Left cardiac atrium (tissue), 4 donors: ENCODE measurements at regions of chr4 and their contacts with region 1.

Region 1: DNA sequence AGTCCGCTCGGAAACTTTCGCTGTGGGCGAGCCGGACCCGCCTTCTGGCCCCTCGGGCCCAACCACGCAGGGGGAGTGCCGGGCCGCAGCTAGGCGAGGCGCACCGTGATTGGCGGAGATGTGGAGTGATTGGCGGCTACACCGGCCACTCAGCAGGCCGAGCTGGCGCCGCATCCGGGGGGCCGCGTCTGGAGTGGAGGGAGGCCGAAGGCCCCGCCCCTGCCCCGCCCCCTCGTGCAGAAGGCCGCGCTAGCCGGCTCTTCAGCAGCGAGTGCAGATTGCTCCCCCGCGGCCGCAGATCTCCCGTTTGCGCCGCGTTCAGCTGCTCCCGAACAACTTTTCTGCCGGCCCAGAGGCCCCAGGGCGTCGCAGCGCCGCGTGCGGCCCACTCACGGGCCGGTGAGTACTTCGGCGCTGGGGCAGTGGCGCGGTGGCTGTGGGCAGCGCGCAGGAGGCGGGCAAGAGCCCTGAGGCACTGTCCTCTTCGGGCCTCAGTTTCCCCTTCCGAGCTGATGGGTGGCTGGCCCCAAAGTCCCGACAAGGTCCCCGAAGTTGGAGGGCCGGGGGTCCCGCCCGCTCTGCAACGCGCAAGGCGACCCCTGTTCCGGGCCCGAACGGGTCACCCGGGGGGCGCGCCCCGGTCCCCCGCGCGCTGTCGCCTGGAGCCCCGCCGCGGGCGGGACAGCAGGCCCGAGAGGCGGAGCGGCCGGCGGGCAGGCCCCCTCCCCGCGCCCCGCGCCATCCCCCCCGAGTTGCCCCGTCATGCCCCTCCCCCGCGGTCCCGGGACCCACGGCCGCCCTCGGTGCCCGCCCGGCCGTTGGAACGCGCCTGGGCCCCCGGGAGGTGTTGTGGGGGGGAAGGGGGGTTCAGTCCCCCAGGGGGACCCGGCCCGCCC is at the start of gene WFS1:
- DNase-seq: peak; percentile 99
- ATAC-seq: peak; percentile 98 to 99
- total RNA-seq, gene WFS1: 66.0 to 68.0 TPM

Region 2: DNA sequence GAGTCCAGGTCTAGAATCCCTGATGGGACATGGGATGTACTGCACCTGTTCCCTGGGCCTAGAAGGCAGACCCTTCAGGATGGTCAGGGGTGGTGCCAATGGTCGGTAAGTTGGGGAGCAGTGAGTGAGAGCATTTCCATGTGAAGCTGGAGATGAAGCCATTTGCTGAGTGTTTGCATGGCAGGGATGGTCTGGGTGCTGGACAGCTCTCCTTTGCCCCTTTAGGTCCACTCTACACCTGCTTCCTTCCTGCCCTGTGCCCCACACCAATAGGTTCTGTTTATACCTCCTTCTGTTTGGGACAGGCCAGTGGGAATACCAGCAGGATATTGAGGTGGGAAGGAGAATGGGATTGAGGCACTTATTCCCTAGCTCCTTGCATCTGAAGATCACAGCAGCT is 1037.3 kb before region 1 on chr4:
- intact Hi-C with region 1: no loop called
- DNase-seq: no peak
- ATAC-seq: no peak

Region 3: GRCh38 chr4:6308899-6309643 is 39.2 kb after region 1 on chr4:
- intact Hi-C with region 1: loop called in 1 of 2 experiments (anchors 5 kb)
- DNase-seq: peak; percentile 55
- ATAC-seq: peak; percentile 79 to 90